HEK293 (cell line): ENCODE measurements at regions of chr10 and their contacts with region 1.

Region 1: GRCh38 chr10:11165591-11166543 is 148.2 kb downstream of the CELF2 start:
- H3K4me3 ChIP-seq: peak overlapping the region; percentile 46
- H3K27ac ChIP-seq: peak overlapping the region; percentile 74
- H3K4me1 ChIP-seq: peaks cover 12% of the 10 kb centered on the region
- CTCF ChIP-seq: no peak; the same call in 1 of the 2 replicates

Region 2: GRCh38 chr10:11145495-11145855 is 20.4 kb before region 1 on chr10:
- CTCF ChIA-PET with region 1: interaction called, 4 read pairs
- POLR2A ChIA-PET with region 1: interaction called, 10 read pairs
- H3K4me3 ChIP-seq: no peak overlapping the region
- H3K27ac ChIP-seq: no peak overlapping the region; the same call in 1 of the 2 replicates
- H3K4me1 ChIP-seq: peaks cover 61% of the 10 kb centered on the region
- CTCF ChIP-seq: no peak

Region 3: DNA sequence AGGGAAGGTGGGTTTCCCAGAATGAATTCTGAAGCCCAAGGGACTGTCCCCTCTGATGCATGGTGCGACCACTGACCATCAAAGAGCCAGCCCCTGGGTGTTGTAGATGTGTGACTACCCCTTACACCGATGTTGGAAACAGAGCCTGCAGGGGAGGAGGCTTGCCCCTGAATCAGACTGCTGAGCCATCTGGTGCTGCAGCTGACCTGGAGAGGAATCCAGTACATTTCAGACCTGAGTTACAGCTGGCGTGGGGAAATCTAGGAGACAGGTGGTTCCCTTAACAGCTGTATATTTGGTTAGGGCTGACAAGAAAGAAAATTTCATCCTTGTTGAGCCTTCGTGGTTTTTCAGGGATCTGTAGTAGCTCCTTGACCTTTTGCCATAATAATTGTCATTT is 47.3 kb after region 1 on chr10:
- CTCF ChIA-PET with region 1: no interaction called
- POLR2A ChIA-PET with region 1: interaction called, 11 read pairs
- H3K4me3 ChIP-seq: no peak overlapping the region
- H3K27ac ChIP-seq: no peak overlapping the region
- H3K4me1 ChIP-seq: no peaks in the 10 kb centered on the region
- CTCF ChIP-seq: no peak